Thyroid gland (tissue), 4 donors: ENCODE measurements at regions of chr2 and their contacts with region 1.

Region 1: DNA sequence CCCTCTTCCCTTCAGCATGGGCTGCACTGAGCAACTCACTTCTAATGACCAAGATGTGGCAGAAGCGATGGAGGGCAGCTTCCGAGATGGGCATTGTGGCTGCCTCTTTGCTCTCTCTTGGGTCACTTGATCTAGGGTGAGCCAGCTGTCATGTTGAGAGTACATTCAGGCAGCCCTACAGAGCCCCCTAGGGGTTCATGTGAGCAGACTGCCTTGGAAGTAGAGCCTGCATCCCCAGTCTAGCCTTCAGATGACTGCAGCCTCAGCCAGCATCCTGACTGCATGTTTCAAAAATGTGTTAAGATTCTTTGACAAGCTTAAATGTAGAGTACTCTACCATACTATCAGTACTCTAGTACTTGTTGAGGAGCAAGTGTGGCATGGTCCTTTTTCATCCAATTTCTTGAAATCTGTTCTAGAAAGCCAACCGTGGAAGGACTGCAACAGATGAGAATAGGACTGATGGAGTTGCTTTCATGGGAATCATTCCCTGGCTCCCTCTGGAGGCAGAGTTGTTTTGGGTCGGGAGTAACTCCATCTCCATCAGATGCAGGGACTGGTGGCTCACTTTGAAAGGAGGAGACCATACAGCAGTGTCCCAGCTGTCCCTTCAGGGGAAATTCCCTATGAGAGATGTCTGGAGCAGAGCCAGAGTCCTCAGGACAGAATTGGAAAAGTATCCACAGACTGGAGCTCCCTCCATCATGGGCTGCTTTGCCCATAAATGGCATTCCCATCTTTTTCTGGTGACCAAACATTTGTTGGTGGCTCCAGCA is 144.1 kb downstream of the NCK2 start:
- DNase-seq: no peak
- H3K4me3 ChIP-seq: no peak overlapping the region
- H3K27ac ChIP-seq: no peak overlapping the region
- H3K4me1 ChIP-seq: peaks cover 21 to 27% of the 10 kb centered on the region in 2 donors
- H3K27me3 ChIP-seq: no peaks in the 10 kb centered on the region
- CTCF ChIP-seq: no peak
- POLR2A ChIP-seq: no peak

Region 2: GRCh38 chr2:105822186-105822585 is 66.6 kb before region 1 on chr2:
- intact Hi-C with region 1: loop called (anchors 10 kb)
- DNase-seq: no peak
- H3K4me3 ChIP-seq: no peak overlapping the region
- H3K27ac ChIP-seq: peak overlapping the region; percentile 79 to 89 (median 83)
- H3K4me1 ChIP-seq: peaks cover 34 to 56% of the 10 kb centered on the region in 2 donors
- H3K27me3 ChIP-seq: no peaks in the 10 kb centered on the region
- CTCF ChIP-seq: no peak
- POLR2A ChIP-seq: no peak